ENCODE measurements at regions of chr10 and their contacts with region 1.

Region 1: DNA sequence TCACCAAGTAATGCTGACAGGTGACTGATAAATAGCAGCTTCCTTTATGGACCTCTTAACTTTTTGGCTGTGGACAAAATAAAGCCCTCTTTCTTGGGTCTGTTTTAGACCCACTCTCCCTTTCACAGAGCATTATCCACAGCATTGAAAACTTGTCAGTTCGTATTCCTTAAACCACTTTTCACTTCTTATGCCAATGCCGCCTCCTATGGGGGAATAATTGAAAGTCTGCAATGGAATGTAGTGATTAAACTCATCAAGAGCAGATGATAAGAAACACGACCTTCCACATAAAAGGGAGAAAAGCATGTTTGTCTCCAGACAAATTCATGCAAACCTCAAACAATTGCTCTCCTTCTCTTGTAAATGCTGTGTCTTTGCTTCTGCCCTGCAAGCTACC is 153.4 kb downstream of the SORCS1 start:
- DNase-seq: no peak
- ATAC-seq: no peak
- H3K4me3 ChIP-seq: no peak overlapping the region
- H3K27ac ChIP-seq: no peak overlapping the region
- H3K4me1 ChIP-seq: peaks cover 4 to 12% of the 10 kb centered on the region in 2 experiments; a peak in 2 of 5 replicates
- H3K27me3 ChIP-seq: no peaks in the 10 kb centered on the region
- CTCF ChIP-seq: peak in 2 of 3 experiments; percentile 12 to 18; a peak in 2 of 6 replicates
- EP300 ChIP-seq: no peak
- POLR2A ChIP-seq: no peak
- RAD21 ChIP-seq: no peak

Region 2: DNA sequence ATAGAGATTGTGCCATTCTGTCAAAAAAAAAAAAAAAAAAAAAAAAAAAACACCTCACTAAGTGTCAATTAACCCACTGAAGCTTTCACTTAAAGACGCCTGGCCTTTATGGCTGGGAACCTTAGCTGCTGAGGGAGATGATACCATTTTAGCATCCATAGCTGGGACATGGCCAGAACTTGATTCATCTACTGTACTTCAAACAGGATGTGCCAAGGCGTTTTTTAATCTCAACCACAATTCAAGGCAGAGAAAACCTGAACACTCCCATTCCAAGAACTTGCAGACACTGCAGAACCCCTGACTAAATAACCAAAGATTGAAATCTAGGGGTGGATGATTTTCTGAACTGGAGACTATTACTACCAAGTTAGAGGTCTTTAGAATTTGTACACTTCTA is 843.2 kb before region 1 on chr10:
- CTCF ChIA-PET with region 1: no interaction called
- POLR2A ChIA-PET with region 1: no interaction called
- in situ Hi-C with region 1: no loop called
- intact Hi-C with region 1: no loop called
- DNase-seq: no peak
- ATAC-seq: no peak
- H3K4me3 ChIP-seq: no peak overlapping the region
- H3K27ac ChIP-seq: no peak overlapping the region
- H3K4me1 ChIP-seq: no peaks in the 10 kb centered on the region
- H3K27me3 ChIP-seq: no peaks in the 10 kb centered on the region
- CTCF ChIP-seq: no peak
- EP300 ChIP-seq: no peak
- POLR2A ChIP-seq: no peak
- RAD21 ChIP-seq: no peak

Region 3: GRCh38 chr10:106863549-106863948 is 147.6 kb before region 1 on chr10:
- CTCF ChIA-PET with region 1: no interaction called
- POLR2A ChIA-PET with region 1: no interaction called
- in situ Hi-C with region 1: no loop called
- intact Hi-C with region 1: loop called (anchors 1 kb)
- DNase-seq: peak in 2 of 4 experiments; percentile 12 to 24
- ATAC-seq: peak; percentile 73
- H3K4me3 ChIP-seq: no peak overlapping the region
- H3K27ac ChIP-seq: no peak overlapping the region
- H3K4me1 ChIP-seq: no peaks in the 10 kb centered on the region; a peak in 1 of 5 replicates
- H3K27me3 ChIP-seq: no peaks in the 10 kb centered on the region
- CTCF ChIP-seq: peak; percentile 36 to 43 (median 41)
- EP300 ChIP-seq: no peak
- POLR2A ChIP-seq: no peak
- RAD21 ChIP-seq: peak in 1 of 2 experiments; percentile 56; a peak in 2 of 4 replicates

Region 4: DNA sequence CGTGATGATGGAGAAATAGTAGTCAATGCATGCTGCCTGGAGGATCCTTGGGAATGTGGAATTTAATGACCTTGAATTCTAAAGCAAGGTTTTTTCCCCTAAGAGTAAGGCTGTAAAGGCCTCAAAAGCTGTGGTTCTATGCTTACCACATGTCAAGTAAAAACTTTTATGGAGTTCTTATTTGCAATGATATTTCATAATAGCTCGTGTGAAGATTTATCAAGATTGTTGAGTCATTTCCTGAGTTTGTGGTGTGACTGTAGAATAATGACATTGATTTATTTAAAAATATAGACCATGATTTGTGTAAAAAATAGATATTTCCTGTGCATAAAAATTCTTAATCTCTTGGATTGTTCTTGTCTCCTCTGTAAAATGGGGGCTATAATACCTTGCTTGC is 220.9 kb after region 1 on chr10:
- CTCF ChIA-PET with region 1: no interaction called
- POLR2A ChIA-PET with region 1: no interaction called
- in situ Hi-C with region 1: no loop called
- intact Hi-C with region 1: no loop called
- DNase-seq: no peak
- ATAC-seq: no peak
- H3K4me3 ChIP-seq: no peak overlapping the region
- H3K27ac ChIP-seq: no peak overlapping the region
- H3K4me1 ChIP-seq: no peaks in the 10 kb centered on the region
- H3K27me3 ChIP-seq: no peaks in the 10 kb centered on the region
- CTCF ChIP-seq: no peak
- EP300 ChIP-seq: no peak
- POLR2A ChIP-seq: no peak
- RAD21 ChIP-seq: no peak